Right lobe of liver (tissue), 6 donors: ENCODE measurements at regions of chr4 and their contacts with region 1.

Region 1: GRCh38 chr4:105666693-105667092 is 41.8 kb downstream of the INTS12 start:
- DNase-seq: no peak
- ATAC-seq: peak; percentile 93 to 98 (median 96)
- H3K4me3 ChIP-seq: no peak overlapping the region
- H3K27ac ChIP-seq: no peak overlapping the region
- H3K4me1 ChIP-seq: no peaks in the 10 kb centered on the region
- H3K27me3 ChIP-seq: no peaks in the 10 kb centered on the region
- CTCF ChIP-seq: peak; percentile 43 to 74 (median 50)
- POLR2A ChIP-seq: no peak

Region 2: GRCh38 chr4:105520817-105521790 is 145.6 kb before region 1 on chr4:
- intact Hi-C with region 1: loop called in 1 of 2 experiments (anchors 10 kb)
- DNase-seq: peak in 1 of 3 donors; percentile 53
- ATAC-seq: peak; percentile 90 to 96 (median 92)
- H3K4me3 ChIP-seq: no peak overlapping the region
- H3K27ac ChIP-seq: no peak overlapping the region
- H3K4me1 ChIP-seq: no peaks in the 10 kb centered on the region
- H3K27me3 ChIP-seq: no peaks in the 10 kb centered on the region
- CTCF ChIP-seq: peak; percentile 68 to 89 (median 74)
- POLR2A ChIP-seq: no peak